ENCODE measurements at regions of chr1 and their contacts with region 1.

Region 1: DNA sequence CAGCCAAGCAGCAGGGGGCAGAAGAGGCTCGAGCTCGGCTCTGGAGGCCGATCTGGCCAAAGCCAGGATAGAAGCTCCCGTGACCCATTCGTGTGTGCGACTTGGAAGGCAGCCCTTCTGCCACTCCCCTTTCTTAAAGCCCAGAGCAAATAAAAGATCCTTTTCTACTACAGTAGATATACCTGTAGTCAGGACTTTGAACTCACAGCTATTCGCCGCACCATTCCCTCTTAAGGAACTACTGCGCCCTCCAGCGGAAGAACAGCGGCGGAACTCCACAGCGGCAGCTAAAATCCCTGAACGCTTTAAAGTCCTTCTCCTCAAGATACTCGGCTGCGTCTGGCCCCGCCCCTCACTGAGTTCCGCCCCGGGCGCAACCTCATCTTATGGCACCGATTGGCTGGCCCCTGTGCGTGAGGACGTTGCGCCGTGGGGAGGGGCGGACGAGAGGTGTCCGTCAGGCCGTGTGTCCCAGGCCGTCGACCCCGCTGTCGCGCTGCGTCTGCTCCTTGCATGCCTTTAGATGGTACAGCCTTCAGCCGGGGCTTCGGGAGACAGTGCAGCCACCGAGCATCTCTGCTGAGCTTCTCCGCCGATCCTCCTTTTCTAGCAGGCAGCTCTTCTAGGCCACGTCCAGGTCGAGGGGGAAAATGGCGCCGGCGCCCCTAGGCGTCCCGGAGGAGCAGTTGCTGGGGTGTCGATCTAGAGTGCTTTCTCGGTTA is at the start of gene LRIG2:
- DNase-seq: peak; percentile 94
- H3K4me3 ChIP-seq: peak within 1 kb of the TSS; percentile 90 to 96
- H3K27ac ChIP-seq: peak within 1 kb of the TSS; percentile 87 to 97
- H3K4me1 ChIP-seq: peaks cover 6 to 7% of the 10 kb centered on the region in 2 experiments; a peak in 3 of 4 replicates
- H3K27me3 ChIP-seq: no peaks in the 10 kb centered on the region
- CTCF ChIP-seq: peak; percentile 99
- EP300 ChIP-seq: no peak; a peak in 1 of 4 replicates
- RAD21 ChIP-seq: peak; percentile 50
- polyA plus RNA-seq, gene LRIG2: 3.8 and 4.9 TPM in 2 replicates

Region 2: DNA sequence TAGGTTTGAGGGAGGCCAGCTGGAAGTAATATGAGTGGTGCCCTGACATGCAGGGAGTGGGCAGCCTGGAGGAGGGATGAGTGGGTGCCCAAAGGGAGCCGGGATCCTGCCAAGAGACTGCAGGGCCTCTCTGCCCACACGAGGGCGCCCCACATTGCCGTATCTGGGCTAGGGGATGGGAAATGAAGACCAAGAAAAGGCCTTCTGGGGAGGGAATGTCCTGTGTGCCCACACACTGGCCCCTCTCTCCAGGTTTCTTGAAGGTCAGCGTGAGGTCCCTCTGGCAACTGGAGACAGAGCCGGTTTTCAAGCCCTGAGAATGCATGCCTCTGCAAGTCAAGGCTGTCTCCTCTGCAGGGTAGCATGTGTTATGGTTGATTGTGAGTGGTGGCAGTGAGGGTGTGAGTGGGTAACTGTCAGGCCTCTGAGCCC is 263.6 kb before region 1 on chr1:
- CTCF ChIA-PET with region 1: interaction called, 12 read pairs
- POLR2A ChIA-PET with region 1: no interaction called
- DNase-seq: peak; percentile 82
- H3K4me3 ChIP-seq: no peak overlapping the region; a peak in 1 of 4 replicates
- H3K27ac ChIP-seq: no peak overlapping the region
- H3K4me1 ChIP-seq: no peaks in the 10 kb centered on the region
- H3K27me3 ChIP-seq: no peaks in the 10 kb centered on the region
- CTCF ChIP-seq: peak; percentile 96
- EP300 ChIP-seq: no peak
- RAD21 ChIP-seq: peak; percentile 81

Region 3: DNA sequence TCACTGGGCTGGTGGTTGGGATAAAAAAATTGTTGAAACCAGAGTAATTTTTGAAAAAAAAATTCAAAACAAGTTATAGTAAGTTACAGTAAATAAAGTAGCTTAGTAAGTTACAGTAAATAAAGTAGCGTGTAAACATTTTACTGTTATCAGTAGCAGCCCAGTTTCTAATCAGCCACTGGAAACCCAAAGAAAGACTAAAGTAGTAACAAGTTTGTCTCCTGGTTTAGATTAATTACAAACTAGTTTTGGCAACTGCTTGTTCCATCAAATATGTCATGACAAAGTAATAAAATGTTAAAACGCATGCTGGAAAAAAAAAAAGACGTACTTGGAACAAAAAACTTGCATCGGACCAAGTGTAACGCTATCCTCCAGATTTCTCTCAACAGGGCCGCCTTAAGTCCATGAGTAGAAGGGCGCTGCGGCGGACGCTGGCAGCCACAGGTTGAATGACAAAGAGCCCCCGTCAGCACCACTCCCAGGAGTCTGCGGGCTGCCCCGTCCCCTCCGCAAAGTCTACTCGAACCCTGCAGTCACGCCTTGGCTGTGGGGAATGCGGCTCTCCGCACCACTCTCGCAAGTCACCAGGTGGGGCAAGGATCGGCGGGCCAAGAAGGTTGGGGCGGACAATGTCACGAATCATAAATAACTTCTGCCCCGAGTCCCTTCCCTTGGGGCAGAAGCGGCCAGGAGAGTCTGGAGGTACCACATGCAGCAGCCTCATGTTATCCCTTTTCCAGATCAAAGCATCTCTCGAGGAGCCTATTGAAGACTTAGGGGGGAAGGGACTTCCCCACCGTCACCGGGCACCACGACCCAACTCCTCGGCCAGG is 117.8 kb before region 1 on chr1:
- CTCF ChIA-PET with region 1: interaction called, 17 read pairs
- POLR2A ChIA-PET with region 1: interaction called, 5 read pairs
- DNase-seq: peak; percentile 70
- H3K4me3 ChIP-seq: peak overlapping the region; percentile 66 to 91
- H3K27ac ChIP-seq: peak overlapping the region; percentile 88 to 89
- H3K4me1 ChIP-seq: peaks cover 18 to 21% of the 10 kb centered on the region in 2 experiments; a peak in 3 of 4 replicates
- H3K27me3 ChIP-seq: no peaks in the 10 kb centered on the region
- CTCF ChIP-seq: no peak
- EP300 ChIP-seq: no peak
- RAD21 ChIP-seq: no peak

Region 4: GRCh38 chr1:113057006-113057405 is 15.9 kb before region 1 on chr1:
- CTCF ChIA-PET with region 1: interaction called, 66 read pairs
- POLR2A ChIA-PET with region 1: interaction called, 20 read pairs
- DNase-seq: peak; percentile 47
- H3K4me3 ChIP-seq: no peak overlapping the region
- H3K27ac ChIP-seq: peak overlapping the region in 1 of 2 experiments; percentile 19; a peak in 1 of 4 replicates
- H3K4me1 ChIP-seq: peaks cover 0 to 22% of the 10 kb centered on the region in 2 experiments; a peak in 1 of 4 replicates
- H3K27me3 ChIP-seq: no peaks in the 10 kb centered on the region
- CTCF ChIP-seq: no peak
- EP300 ChIP-seq: no peak
- RAD21 ChIP-seq: no peak

Region 5: DNA sequence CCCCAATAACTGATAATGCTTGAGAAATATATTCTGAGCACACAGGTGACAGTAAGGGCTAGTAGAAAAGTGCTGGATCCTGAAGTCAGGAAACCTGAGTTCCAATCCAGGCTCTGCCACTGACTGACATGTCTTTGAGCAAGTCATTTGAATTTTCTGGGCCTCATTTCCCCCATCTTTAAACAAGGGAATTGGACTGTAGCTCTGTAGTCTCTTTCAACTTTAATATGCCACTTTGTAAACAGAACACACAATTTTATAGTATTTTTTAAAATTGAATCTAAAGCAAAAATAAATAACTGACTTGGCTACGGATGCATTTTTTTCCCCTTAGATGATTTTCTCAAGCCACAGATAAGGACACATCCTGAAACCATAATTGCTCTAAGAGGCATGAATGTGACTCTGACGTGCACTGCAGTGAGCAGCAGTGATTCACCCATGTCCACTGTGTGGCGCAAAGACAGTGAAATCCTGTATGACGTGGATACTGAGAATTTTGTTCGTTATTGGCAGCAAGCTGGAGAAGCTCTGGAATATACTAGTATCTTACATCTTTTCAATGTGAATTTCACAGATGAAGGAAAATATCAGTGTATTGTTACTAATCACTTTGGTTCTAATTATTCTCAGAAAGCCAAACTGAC is 37.1 kb after region 1 on chr1:
- CTCF ChIA-PET with region 1: interaction called, 12 read pairs
- POLR2A ChIA-PET with region 1: no interaction called
- DNase-seq: peak; percentile 61
- H3K4me3 ChIP-seq: no peak overlapping the region
- H3K27ac ChIP-seq: peak overlapping the region; percentile 18 to 89; a peak in 3 of 4 replicates
- H3K4me1 ChIP-seq: peaks cover 0 to 4% of the 10 kb centered on the region in 2 experiments; a peak in 1 of 4 replicates
- H3K27me3 ChIP-seq: no peaks in the 10 kb centered on the region
- CTCF ChIP-seq: peak; percentile 58
- EP300 ChIP-seq: no peak
- RAD21 ChIP-seq: peak; percentile 58

Region 6: GRCh38 chr1:113242481-113242880 is 169.6 kb after region 1 on chr1:
- CTCF ChIA-PET with region 1: no interaction called
- POLR2A ChIA-PET with region 1: no interaction called
- DNase-seq: no peak
- H3K4me3 ChIP-seq: no peak overlapping the region; a peak in 1 of 4 replicates
- H3K27ac ChIP-seq: peak overlapping the region in 1 of 2 experiments; percentile 67; a peak in 2 of 4 replicates
- H3K4me1 ChIP-seq: peaks cover 0 to 18% of the 10 kb centered on the region in 2 experiments; a peak in 2 of 4 replicates
- H3K27me3 ChIP-seq: no peaks in the 10 kb centered on the region; the same call in 1 of the 2 replicates
- CTCF ChIP-seq: no peak
- EP300 ChIP-seq: no peak
- RAD21 ChIP-seq: no peak

Region 7: DNA sequence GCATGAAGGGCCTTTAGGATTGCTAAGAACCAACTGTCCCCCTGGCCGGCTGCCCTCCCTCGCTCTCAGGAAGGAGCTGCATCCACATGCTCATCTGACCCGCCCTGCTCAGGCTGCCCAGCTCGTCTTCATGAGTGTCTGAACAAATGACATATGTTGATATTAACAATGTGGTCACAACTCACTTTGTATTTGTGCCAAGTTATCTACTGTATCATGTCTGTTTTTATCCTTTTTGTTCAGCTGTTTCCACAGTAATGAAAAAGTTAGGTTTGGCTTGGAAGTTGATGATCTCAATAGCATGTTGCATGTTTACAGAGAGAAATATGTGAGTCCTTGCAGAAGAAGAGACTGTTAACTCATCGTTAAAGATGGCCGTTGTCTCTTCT is 611.2 kb after region 1 on chr1:
- CTCF ChIA-PET with region 1: interaction called, 14 read pairs
- POLR2A ChIA-PET with region 1: no interaction called
- DNase-seq: peak; percentile 51
- H3K4me3 ChIP-seq: no peak overlapping the region
- H3K27ac ChIP-seq: peak overlapping the region; percentile 34 to 72
- H3K4me1 ChIP-seq: peaks cover 0 to 9% of the 10 kb centered on the region in 2 experiments; a peak in 2 of 4 replicates
- H3K27me3 ChIP-seq: no peaks in the 10 kb centered on the region
- CTCF ChIP-seq: no peak
- EP300 ChIP-seq: peak in 1 of 2 experiments; percentile 27; a peak in 1 of 4 replicates
- RAD21 ChIP-seq: no peak

Measured in SK-N-SH (cell line).